Right ventricle myocardium inferior (tissue), 1 donor: ENCODE measurements at regions of chr11 and their contacts with region 1.

Region 1: DNA sequence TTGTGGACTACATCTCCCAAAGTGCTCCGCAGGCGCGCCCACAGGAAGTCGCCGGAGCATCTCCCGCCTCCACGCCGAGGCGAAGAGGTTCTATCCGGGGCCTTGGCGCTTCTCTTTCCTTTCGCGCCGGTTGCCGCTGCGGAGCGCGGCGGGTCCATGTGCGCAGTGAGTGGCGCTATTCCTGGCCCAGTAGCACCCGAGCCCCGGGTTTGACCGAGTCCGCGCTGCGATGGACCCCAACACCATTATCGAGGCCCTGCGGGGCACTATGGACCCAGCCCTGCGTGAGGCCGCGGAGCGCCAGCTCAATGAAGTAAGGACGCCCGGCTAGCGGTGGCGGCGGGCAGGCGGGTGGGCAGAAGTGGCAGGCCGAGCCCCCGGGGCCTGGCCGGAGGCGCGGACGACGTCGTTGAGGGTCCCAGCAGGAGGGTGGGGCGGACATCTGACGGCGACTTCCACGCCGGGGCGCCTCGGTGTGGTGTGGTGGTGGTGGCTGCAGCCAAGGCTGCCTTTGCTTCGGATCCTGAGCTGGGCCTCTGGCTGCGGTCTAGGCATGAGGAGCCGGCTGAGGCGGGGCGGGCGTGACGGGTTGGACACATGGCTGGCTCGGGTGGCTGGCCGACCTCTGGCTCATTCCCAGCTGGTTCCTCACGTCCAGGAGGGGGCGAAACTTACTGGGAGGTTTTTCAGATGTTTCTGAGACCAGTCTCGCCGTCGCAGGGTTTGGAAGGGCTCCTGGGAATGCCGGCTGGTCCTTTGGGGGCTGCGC is at the start of gene IPO7:
- DNase-seq: peak; percentile 94
- ATAC-seq: peak; percentile 97
- total RNA-seq, gene IPO7: 130 TPM

Region 2: DNA sequence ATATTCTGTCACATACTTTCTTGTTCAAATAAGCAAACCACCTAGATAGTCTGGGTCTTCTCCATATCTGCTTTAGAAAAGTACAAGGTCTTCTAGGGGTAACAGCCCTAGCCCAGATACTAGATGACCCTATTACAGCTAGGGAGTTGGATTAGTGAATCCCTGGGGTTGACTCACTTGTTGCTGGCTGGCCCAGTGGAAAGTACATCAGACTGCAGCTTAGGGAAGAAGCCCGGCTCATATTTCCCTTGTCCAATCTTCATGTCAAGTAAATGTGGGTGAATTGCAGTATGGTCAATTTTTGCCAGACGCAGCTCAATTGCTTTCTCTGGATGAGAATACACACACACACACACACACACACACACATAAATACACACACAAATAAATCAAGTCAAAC is 214.3 kb before region 1 on chr11:
- intact Hi-C with region 1: loop called (anchors 10 kb)
- DNase-seq: no peak
- ATAC-seq: no peak

Region 3: DNA sequence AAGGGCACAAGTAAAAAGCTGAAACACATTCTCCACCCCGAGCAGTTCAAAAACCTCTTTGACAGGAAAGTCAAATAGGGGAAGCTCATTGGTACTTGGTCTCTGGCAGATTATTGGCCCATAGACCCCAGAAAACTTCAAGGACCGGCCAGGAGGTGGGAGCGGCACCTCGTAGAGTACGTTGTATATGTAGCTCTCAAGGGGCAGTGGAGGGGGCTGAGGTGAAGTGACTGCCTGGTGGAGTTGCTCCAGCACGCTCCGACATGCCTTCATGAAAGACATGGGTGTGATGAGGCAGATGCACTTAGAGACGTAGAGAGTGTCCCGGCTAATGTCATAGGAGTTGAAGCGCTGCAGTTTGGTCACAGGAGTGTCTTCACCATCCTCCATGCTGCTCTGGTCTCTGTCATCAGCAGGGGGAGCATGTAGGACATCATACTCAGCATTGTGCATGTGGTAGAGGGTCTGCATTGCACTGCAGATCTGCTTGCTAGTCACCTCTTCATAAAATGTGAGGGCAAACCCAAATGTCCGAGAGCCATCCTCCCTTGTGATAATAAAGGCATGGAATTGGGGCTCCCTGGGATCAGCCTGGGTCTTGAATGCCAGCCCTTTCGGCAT is 180.9 kb before region 1 on chr11:
- intact Hi-C with region 1: loop called (anchors 10 kb)
- DNase-seq: no peak
- ATAC-seq: peak; percentile 47

Region 4: DNA sequence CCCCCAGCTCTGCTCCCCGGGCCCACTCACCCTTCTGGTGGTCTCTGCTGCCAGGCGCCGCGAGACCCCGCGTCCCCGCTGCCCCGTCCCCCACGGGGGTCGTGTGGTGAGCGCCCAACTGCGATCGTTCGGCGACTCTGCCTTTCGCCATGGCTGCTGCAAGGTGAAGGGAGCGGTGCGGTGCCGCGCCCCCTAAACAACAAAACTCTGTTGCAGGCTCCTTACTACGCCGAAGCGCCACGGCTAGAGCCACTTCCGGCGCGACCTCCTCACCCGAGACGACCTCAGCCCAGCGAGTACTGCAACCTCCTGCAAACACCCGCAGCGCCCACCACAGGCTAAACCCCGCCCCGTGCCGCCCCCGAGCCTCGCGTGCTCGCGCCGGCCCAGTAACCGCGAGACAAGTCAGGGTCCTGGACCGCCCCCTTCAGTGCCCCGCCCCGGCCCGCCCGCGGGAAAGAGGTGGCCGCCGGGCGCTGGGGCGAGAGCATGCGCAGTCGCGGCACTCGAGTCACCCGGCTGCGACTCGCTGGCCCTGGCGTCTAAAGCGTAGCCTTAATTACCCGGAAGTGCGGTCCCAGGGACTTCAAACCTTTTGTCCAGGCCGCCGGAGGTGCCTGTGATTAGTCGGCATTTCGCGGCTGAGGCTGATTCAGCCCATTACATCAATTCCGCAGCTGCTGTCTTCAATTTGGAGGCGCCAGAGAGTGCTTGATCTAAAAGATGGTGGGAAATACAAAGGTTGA is 70.3 kb before region 1 on chr11 and contains the start of gene TMEM41B:
- intact Hi-C with region 1: loop called (anchors 5 kb)
- DNase-seq: peak; percentile 99
- ATAC-seq: peak; percentile 100
- total RNA-seq, gene TMEM41B: 17.4 TPM

Region 5: DNA sequence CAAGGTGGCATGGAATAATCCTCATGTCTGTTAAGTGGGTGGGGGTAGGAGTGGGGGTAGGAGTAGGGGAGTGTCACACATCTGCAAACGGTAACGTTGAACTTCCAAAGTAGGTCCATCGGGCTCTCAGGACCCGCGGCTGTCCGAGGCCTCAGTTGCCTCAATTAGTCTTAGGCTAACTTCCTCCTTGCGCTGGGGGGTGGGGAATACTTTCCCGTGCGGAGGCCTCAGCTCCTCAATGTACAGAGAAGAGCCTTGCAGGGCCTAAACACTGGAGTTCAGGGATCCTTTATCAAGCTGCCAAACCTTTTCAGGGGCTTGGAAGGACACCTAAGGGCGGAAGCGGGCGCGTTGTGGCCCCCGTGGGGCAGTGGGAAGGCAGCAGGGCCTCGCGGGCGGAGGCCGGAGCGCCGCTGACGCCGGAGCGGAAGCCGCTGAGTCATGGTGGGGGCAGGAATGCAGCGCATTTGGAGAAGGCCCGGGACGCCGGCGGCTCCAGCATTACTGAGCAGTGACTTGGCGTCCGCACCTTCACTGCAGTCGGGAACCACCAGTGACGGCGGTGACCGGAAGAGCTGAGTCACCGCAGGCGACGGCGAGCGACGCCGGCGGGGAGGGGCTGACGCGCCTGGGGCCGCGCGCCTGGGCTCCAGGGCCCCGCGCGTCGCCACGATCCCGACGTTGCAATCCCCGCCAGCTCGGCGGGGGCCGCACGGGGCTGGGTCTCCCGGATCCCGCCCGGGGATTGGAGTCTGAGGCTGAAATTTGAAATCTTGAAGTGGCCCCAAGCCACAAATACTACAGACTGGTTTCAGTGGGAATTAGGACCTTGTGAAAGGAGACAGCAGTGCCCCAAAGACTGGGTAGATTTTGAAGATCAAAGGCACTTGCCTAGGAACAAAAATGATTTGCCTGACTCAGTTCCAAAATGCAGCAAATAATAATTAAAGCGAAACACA is 20.5 kb before region 1 on chr11:
- intact Hi-C with region 1: loop called (anchors 2 kb)
- DNase-seq: peak; percentile 98
- ATAC-seq: peak; percentile 97